Activated CD8-positive, alpha-beta T cell treated with anti-CD3 and anti-CD28 coated beads for 36 hours (primary cell): ENCODE measurements at regions of chr22 and their contacts with region 1.

Region 1: DNA sequence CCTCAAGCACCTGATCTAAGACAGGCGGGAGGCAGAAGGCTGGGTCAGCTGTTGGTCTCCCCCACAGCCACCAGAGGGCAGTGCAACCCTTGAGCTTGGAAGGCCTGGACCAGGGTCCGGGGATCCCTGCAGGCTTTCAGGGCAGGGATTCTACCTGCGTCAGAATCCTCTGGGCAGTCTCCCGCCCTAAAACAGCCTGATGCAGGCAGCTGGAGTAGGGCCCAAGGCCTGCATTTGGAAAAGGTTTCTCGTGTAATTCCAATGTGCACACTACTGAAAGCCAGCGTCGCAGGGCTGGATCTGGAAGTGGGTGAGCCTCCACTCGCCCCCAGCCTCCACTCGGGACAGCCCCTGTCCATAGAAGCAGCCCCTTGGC is 31.8 kb downstream of the BID start:
- DNase-seq: peak; percentile 80
- ATAC-seq: peak; percentile 97
- H3K4me3 Mint-ChIP-seq: no peak overlapping the region
- H3K27ac Mint-ChIP-seq: no peak overlapping the region
- H3K4me1 Mint-ChIP-seq: peaks cover 5% of the 10 kb centered on the region
- H3K27me3 Mint-ChIP-seq: no peaks in the 10 kb centered on the region
- CTCF ChIP-seq: peak; percentile 91

Region 2: GRCh38 chr22:17754233-17754925 is 11.9 kb after region 1 on chr22:
- CTCF ChIA-PET with region 1: interaction called, 30 read pairs
- POLR2A ChIA-PET with region 1: interaction called, 3 read pairs
- intact Hi-C with region 1: no loop called
- DNase-seq: peak; percentile 63
- ATAC-seq: peak; percentile 76
- H3K4me3 Mint-ChIP-seq: no peak overlapping the region
- H3K27ac Mint-ChIP-seq: no peak overlapping the region
- H3K4me1 Mint-ChIP-seq: peaks cover 4% of the 10 kb centered on the region
- H3K27me3 Mint-ChIP-seq: no peaks in the 10 kb centered on the region
- CTCF ChIP-seq: peak; percentile 61

Region 3: DNA sequence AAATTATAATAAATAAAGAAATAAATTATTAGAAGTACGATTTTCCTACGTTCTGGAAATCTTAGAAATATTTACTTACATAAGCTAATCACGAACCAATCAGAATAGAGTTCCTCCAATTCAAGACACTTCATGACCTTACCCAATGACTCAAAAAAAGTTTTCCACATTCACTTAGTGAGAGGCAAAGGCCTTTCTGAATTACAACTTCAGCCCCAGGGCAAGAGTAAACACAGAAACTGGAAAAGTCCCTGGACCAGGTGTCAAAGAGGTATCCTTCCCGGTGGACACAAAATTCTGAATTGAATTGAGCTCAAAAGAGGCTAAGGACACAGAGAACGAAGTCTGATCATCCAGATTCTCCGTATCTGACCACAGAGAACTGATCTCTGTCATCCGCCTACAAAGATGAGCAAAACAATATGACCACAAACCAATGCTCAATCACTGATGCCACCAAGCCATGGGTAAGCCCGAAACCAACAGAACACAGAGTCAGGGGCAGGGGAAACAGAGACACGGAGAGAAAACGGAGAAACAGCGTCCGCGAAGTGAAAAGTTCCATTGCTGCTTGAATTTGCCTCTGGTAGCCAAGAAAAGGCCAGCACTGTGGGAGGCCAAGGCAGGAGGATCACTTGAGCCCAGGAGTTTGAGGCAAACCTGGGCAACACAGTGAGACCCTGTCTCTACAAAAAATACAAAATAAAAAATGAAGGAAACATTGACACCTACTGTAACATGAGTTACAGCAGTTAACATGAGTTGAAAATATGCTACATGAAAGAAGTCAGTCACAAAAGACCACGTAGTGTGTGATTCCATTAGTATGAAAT is 24.9 kb after region 1 on chr22:
- CTCF ChIA-PET with region 1: interaction called, 12 read pairs
- POLR2A ChIA-PET with region 1: interaction called, 3 read pairs
- intact Hi-C with region 1: no loop called
- DNase-seq: peak; percentile 86
- ATAC-seq: peak; percentile 86
- H3K4me3 Mint-ChIP-seq: peak overlapping the region; percentile 49
- H3K27ac Mint-ChIP-seq: peak overlapping the region; percentile 76
- H3K4me1 Mint-ChIP-seq: peaks cover 48% of the 10 kb centered on the region
- H3K27me3 Mint-ChIP-seq: peaks cover 1% of the 10 kb centered on the region
- CTCF ChIP-seq: no peak

Region 4: GRCh38 chr22:17777005-17777716 is 34.6 kb after region 1 on chr22:
- CTCF ChIA-PET with region 1: interaction called, 22 read pairs
- POLR2A ChIA-PET with region 1: interaction called, 4 read pairs
- intact Hi-C with region 1: loop called (anchors 5 kb)
- DNase-seq: peak; percentile 87
- ATAC-seq: peak; percentile 29
- H3K4me3 Mint-ChIP-seq: peak overlapping the region; percentile 91
- H3K27ac Mint-ChIP-seq: peak overlapping the region; percentile 99
- H3K4me1 Mint-ChIP-seq: peaks cover 82% of the 10 kb centered on the region
- H3K27me3 Mint-ChIP-seq: no peaks in the 10 kb centered on the region
- CTCF ChIP-seq: no peak

Region 5: GRCh38 chr22:17830043-17830961 is 87.8 kb after region 1 on chr22:
- CTCF ChIA-PET with region 1: interaction called, 17 read pairs
- POLR2A ChIA-PET with region 1: no interaction called
- intact Hi-C with region 1: no loop called
- DNase-seq: peak; percentile 88
- ATAC-seq: peak; percentile 99
- H3K4me3 Mint-ChIP-seq: no peak overlapping the region
- H3K27ac Mint-ChIP-seq: no peak overlapping the region
- H3K4me1 Mint-ChIP-seq: peaks cover 4% of the 10 kb centered on the region
- H3K27me3 Mint-ChIP-seq: no peaks in the 10 kb centered on the region
- CTCF ChIP-seq: peak; percentile 99

Region 6: GRCh38 chr22:17853073-17853472 is 110.6 kb after region 1 on chr22:
- CTCF ChIA-PET with region 1: no interaction called
- POLR2A ChIA-PET with region 1: no interaction called
- intact Hi-C with region 1: no loop called
- DNase-seq: no peak
- ATAC-seq: no peak
- H3K4me3 Mint-ChIP-seq: no peak overlapping the region
- H3K27ac Mint-ChIP-seq: no peak overlapping the region
- H3K4me1 Mint-ChIP-seq: no peaks in the 10 kb centered on the region
- H3K27me3 Mint-ChIP-seq: no peaks in the 10 kb centered on the region
- CTCF ChIP-seq: no peak

Region 7: GRCh38 chr22:18077639-18078328 is 335.3 kb after region 1 on chr22 and contains the start of gene PEX26:
- CTCF ChIA-PET with region 1: interaction called, 36 read pairs
- POLR2A ChIA-PET with region 1: no interaction called
- intact Hi-C with region 1: no loop called
- DNase-seq: peak; percentile 97
- ATAC-seq: peak; percentile 98
- H3K4me3 Mint-ChIP-seq: peak within 1 kb of the TSS; percentile 99
- H3K27ac Mint-ChIP-seq: peak within 1 kb of the TSS; percentile 99
- H3K4me1 Mint-ChIP-seq: peaks cover 51% of the 10 kb centered on the region
- H3K27me3 Mint-ChIP-seq: no peaks in the 10 kb centered on the region
- CTCF ChIP-seq: no peak
- total RNA-seq, gene PEX26: 57.8 to 59.7 TPM